Uterus (tissue), 4 donors: ENCODE measurements at regions of chr20 and their contacts with region 1.

Region 1: DNA sequence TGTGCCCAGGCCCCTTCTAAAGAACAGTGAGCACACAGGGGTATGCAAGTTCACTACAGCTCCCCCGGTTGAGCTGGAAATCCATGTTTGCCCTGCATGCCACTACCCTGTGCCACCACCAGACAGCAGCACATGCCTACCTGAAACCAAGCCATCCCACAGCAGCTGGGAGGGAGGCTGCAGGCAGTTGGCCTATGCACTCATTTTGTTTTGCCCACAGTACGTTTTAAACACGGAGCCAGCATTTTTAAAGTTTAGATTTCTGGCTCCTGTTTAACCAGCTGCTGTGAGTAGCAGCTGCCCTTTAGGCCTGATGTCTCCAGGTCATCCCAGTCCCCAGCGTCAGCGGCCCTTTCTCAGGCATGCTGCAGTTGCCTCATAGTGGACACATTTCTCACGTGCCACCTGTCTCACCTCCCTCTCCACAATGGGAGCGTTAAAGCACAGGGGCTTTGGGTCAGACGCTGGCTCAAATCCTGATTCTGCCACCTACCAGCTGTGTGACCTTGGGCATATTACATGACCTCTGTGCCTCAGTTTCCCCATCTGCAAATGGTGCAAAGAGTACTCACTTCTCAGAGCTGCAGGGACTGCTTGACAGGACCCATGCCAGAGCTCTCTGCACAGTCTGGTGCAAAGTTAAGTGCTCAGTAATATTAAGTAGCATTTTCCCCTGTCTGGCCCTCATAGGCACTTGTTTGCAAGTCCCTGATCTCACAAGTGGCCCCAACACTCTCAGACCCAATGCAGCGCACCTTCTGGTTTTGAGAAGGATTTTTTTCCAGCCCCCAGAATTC is 8.1 kb upstream of the UBE2V1 start:
- DNase-seq: no peak
- H3K4me3 ChIP-seq: no peak overlapping the region
- H3K27ac ChIP-seq: no peak overlapping the region
- H3K4me1 ChIP-seq: no peaks in the 10 kb centered on the region
- H3K27me3 ChIP-seq: no peaks in the 10 kb centered on the region
- CTCF ChIP-seq: peak; percentile 60 to 91 (median 74)
- POLR2A ChIP-seq: no peak

Region 2: GRCh38 chr20:49901588-49901987 is 219.5 kb before region 1 on chr20:
- intact Hi-C with region 1: no loop called
- DNase-seq: no peak
- H3K4me3 ChIP-seq: no peak overlapping the region
- H3K27ac ChIP-seq: no peak overlapping the region
- H3K4me1 ChIP-seq: no peaks in the 10 kb centered on the region
- H3K27me3 ChIP-seq: no peaks in the 10 kb centered on the region
- CTCF ChIP-seq: no peak
- POLR2A ChIP-seq: no peak

Region 3: DNA sequence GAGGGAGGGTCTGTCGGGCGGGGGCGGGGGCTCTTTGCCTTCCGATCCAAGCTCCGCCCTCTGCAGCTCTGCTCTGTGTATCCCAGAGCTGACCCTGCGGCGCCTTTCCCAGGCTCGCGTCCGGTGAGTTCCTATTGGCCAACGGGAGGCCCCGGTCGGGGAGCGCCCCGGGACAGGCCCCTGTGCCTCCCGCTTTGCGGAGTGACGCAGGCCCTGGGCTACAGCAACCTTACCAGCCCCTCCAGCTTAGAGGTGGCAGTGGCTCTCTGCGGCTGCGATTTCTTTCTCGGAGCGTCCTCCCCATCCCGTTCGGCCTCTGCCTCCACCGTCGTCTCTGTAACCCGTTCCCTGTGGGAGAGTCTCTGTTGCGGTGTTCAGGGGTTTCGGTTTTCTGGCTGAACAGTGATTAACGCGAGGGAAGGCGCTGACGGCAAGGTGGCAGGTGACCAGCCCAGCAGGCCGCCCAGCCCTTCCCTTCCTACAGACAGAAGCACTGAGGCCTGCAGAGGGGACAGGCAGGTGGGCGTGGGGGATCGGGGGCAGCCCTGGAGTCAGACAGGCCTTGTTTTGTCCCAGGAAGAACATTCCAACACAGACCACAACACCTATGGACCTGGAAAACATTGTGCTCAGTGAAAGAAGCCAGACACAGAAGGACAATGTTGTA is 51.4 kb after region 1 on chr20:
- intact Hi-C with region 1: loop called (anchors 5 kb)
- DNase-seq: peak; percentile 81 to 83
- H3K4me3 ChIP-seq: peak overlapping the region; percentile 49 to 51
- H3K27ac ChIP-seq: peak overlapping the region; percentile 79 to 85
- H3K4me1 ChIP-seq: peaks cover 0 to 10% of the 10 kb centered on the region in 2 donors
- H3K27me3 ChIP-seq: no peaks in the 10 kb centered on the region
- CTCF ChIP-seq: peak in 1 of 4 experiments; percentile 17
- POLR2A ChIP-seq: peak; percentile 53 to 63

Region 4: DNA sequence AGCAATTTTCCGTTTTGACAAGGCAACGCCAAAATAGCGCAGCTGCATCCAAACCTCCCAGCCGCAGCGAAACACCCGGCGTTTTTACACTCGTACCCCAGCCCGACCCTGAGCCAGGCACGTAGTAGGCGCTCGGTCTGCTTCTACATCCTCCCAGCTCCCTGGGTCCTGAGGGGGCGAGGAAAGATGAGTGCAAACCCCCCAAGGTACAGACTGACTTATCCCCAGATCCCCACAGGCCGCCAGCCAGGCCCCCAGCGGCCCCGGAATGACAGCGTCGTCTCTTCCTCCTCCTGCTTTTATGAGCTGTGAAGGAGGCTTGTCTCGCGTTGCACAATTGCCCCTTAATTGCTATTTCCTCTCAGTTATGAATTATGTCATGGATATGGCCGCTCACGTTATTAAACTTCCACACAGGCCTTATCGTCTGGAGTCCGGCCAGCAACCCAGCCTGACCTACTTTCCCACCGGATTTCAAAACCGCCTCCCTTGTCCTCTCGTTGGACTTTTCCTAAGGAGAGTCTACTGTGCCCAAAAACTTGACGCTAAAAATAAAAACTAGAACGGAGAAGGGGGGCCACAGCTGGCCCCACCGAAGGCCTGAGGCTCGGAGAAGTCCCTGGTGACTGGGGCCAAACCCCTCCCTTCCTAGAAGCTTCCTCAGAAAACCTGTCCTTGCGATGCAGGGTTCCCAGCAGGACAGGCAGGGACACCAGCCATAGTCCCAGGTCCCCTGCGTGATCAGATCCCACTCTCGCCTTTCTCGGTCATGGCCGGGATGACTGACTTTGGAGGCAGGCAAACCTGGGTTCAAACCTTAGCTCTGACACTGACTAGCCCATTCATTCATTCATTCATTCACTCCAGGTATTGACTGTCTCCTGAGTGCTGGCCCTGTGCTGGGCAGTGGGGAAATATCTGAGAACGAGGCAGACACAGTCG is 258.2 kb after region 1 on chr20:
- intact Hi-C with region 1: no loop called
- DNase-seq: peak; percentile 96 to 98
- H3K4me3 ChIP-seq: no peak overlapping the region
- H3K27ac ChIP-seq: peak overlapping the region; percentile 77 to 85
- H3K4me1 ChIP-seq: peaks cover 6 to 10% of the 10 kb centered on the region in 2 donors
- H3K27me3 ChIP-seq: no peaks in the 10 kb centered on the region
- CTCF ChIP-seq: peak in 1 of 4 experiments; percentile 15
- POLR2A ChIP-seq: peak; percentile 32 to 52